AG04449 (cell line): ENCODE measurements at regions of chr5 and their contacts with region 1.

Region 1: GRCh38 chr5:143824851-143825720 is 13.1 kb downstream of the HMHB1 start:
- DNase-seq: no peak
- H3K4me3 ChIP-seq: no peak overlapping the region
- CTCF ChIP-seq: peak; percentile 96

Region 2: DNA sequence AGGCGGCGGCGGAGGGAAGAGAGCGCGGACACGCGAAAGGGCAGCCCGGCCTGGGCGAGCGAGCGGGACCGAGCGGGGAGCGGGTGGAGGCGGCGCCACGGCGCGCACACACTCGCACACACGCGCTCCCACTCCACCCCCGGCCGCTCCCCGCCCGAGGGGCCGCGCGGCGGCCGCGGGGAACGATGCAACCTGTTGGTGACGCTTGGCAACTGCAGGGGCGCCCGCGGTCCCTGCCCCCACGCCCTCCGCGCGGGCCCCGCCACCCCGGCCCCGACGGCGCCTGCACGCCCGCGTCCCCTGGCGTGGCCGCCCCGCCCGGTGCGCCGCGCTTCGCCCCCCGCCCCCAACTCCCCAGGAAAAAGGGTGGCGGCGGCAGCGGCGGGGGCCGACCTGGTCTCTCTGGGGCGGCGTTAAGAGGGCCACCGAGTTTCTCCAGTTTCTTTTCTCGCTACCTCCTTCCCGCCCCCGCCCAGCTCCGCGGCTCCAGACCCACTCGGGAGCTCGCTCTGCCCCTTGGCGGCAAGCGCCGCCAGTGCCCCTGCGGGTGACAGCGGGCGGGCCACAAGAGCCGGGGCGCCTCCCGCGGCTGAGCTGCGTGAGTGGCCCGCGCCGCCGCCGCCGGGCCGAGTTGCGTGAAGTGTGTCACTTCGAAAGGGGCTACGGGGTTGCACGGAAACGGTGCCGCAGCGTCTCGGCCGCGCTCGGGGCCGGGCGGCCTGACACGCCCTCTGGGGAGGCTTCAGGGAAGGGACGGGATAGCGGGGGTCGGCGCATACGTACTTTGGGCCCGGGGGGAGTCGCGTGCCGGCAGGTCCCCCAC is 421.3 kb before region 1 on chr5 and contains the start of gene NR3C1:
- CTCF ChIA-PET with region 1: interaction called, 30 read pairs
- POLR2A ChIA-PET with region 1: interaction called, 3 read pairs
- DNase-seq: no peak
- H3K4me3 ChIP-seq: peak within 1 kb of the TSS; percentile 80
- CTCF ChIP-seq: peak; percentile 75

Region 3: GRCh38 chr5:143837306-143837848 is 12.3 kb after region 1 on chr5:
- CTCF ChIA-PET with region 1: interaction called, 38 read pairs
- POLR2A ChIA-PET with region 1: no interaction called
- DNase-seq: peak; percentile 42
- H3K4me3 ChIP-seq: no peak overlapping the region
- CTCF ChIP-seq: no peak

Region 4: GRCh38 chr5:143968011-143968878 is 143.2 kb after region 1 on chr5:
- CTCF ChIA-PET with region 1: interaction called, 24 read pairs
- POLR2A ChIA-PET with region 1: no interaction called
- DNase-seq: no peak
- H3K4me3 ChIP-seq: no peak overlapping the region
- CTCF ChIP-seq: peak; percentile 38